Caco-2 (cell line): ENCODE measurements at regions of chr10 and their contacts with region 1.

Region 1: GRCh38 chr10:58258977-58259692 is 8.6 kb downstream of the IPMK start:
- DNase-seq: no peak
- H3K4me3 ChIP-seq: no peak overlapping the region
- H3K4me3 Mint-ChIP-seq: no peak overlapping the region
- H3K27ac Mint-ChIP-seq: no peak overlapping the region
- H3K4me1 ChIP-seq: peaks cover 18% of the 10 kb centered on the region
- H3K4me1 Mint-ChIP-seq: peaks cover 15% of the 10 kb centered on the region
- H3K27me3 ChIP-seq: no peaks in the 10 kb centered on the region
- H3K27me3 Mint-ChIP-seq: no peaks in the 10 kb centered on the region
- CTCF ChIP-seq: peak; percentile 1 to 47

Region 2: GRCh38 chr10:58239561-58240169 is 19.5 kb before region 1 on chr10:
- CTCF ChIA-PET with region 1: no interaction called
- POLR2A ChIA-PET with region 1: no interaction called
- intact Hi-C with region 1: loop called (anchors 1 kb)
- DNase-seq: peak; percentile 48 to 57
- H3K4me3 ChIP-seq: no peak overlapping the region
- H3K4me3 Mint-ChIP-seq: peak overlapping the region; percentile 34
- H3K27ac Mint-ChIP-seq: peak overlapping the region; percentile 32
- H3K4me1 ChIP-seq: peaks cover 36% of the 10 kb centered on the region
- H3K4me1 Mint-ChIP-seq: peaks cover 46% of the 10 kb centered on the region
- H3K27me3 ChIP-seq: no peaks in the 10 kb centered on the region
- H3K27me3 Mint-ChIP-seq: no peaks in the 10 kb centered on the region
- CTCF ChIP-seq: no peak

Region 3: GRCh38 chr10:58291538-58292174 is 32.5 kb after region 1 on chr10:
- CTCF ChIA-PET with region 1: no interaction called
- POLR2A ChIA-PET with region 1: no interaction called
- intact Hi-C with region 1: no loop called
- DNase-seq: peak; percentile 58 to 79
- H3K4me3 ChIP-seq: no peak overlapping the region
- H3K4me3 Mint-ChIP-seq: no peak overlapping the region
- H3K27ac Mint-ChIP-seq: no peak overlapping the region
- H3K4me1 ChIP-seq: no peaks in the 10 kb centered on the region
- H3K4me1 Mint-ChIP-seq: peaks cover 6% of the 10 kb centered on the region
- H3K27me3 ChIP-seq: no peaks in the 10 kb centered on the region
- H3K27me3 Mint-ChIP-seq: no peaks in the 10 kb centered on the region
- CTCF ChIP-seq: peak; percentile 94 to 96